ENCODE measurements at regions of chr4 and their contacts with region 1.

Region 1: DNA sequence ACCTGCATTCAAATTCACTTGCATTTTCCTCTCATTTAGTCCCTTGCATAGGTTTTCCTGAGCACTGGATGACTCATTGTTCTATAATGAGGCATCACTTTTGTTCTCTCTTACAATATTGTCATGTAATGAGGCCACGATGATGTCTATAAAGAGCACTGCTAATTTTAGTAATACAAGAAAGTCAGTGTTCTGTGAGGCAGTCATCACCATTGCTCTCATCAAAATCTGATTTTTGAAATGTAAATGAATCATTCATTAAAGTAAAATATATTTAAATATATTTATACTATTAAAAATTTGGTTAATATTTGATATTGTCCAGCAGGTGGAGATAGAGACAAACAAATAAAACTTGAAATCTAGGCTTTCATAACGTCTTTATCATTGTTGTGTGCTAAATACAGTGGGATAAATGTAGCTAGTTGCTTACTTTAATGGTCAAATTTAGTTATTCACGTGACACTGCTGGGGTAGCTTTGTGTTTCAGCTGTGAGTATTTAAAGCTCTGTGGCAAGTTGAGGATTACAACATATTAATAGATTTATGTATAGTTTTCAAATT is 15.4 kb downstream of the HMGB2 start:
- DNase-seq: no peak
- H3K4me3 ChIP-seq: no peak overlapping the region
- H3K27ac ChIP-seq: no peak overlapping the region
- H3K27me3 ChIP-seq: no peaks in the 10 kb centered on the region
- CTCF ChIP-seq: peak; percentile 27; the same call in 1 of the 2 replicates

Region 2: DNA sequence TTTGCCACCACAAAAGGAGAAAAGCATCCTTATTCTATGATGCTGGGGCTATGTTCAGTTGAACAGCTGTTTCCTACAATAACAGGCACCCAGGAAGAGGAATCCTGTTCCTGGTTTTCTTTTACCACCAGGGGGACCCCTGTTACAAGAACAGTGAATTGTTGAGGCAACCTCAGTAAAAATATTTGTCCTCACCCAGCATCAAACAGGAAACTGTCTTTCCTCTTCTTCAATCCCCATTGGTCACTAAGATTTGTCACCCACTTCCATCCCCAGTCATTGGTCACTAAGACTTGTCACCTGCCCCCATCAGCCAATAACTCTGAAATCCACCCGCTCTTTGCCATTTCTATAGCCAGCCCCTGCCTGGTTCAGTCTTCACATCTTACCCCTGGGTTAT is 293.6 kb before region 1 on chr4:
- CTCF ChIA-PET with region 1: interaction called, 4 read pairs
- POLR2A ChIA-PET with region 1: interaction called, 13 read pairs
- DNase-seq: peak; percentile 65
- H3K4me3 ChIP-seq: no peak overlapping the region
- H3K27ac ChIP-seq: no peak overlapping the region
- H3K27me3 ChIP-seq: peaks cover 7% of the 10 kb centered on the region
- CTCF ChIP-seq: peak; percentile 79

Region 3: GRCh38 chr4:173334085-173334772 is 15.5 kb after region 1 on chr4 and contains the start of gene HMGB2:
- CTCF ChIA-PET with region 1: interaction called, 20 read pairs
- POLR2A ChIA-PET with region 1: interaction called, 6 read pairs
- DNase-seq: peak; percentile 100
- H3K4me3 ChIP-seq: peak within 1 kb of the TSS; percentile 90
- H3K27ac ChIP-seq: peak within 1 kb of the TSS; percentile 98
- H3K27me3 ChIP-seq: no peaks in the 10 kb centered on the region
- CTCF ChIP-seq: no peak
- polyA plus RNA-seq, gene HMGB2: 57.7 and 89.8 TPM in 2 replicates

Region 4: GRCh38 chr4:173360587-173361221 is 42.0 kb after region 1 on chr4:
- CTCF ChIA-PET with region 1: interaction called, 18 read pairs
- POLR2A ChIA-PET with region 1: no interaction called
- DNase-seq: no peak
- H3K4me3 ChIP-seq: no peak overlapping the region
- H3K27ac ChIP-seq: no peak overlapping the region
- H3K27me3 ChIP-seq: no peaks in the 10 kb centered on the region
- CTCF ChIP-seq: peak; percentile 55; the same call in 1 of the 2 replicates

Region 5: GRCh38 chr4:173403051-173403450 is 84.3 kb after region 1 on chr4:
- CTCF ChIA-PET with region 1: interaction called, 248 read pairs
- POLR2A ChIA-PET with region 1: no interaction called
- DNase-seq: no peak
- H3K4me3 ChIP-seq: no peak overlapping the region
- H3K27ac ChIP-seq: no peak overlapping the region
- H3K27me3 ChIP-seq: no peaks in the 10 kb centered on the region
- CTCF ChIP-seq: no peak

Region 6: GRCh38 chr4:173466101-173466500 is 147.4 kb after region 1 on chr4:
- CTCF ChIA-PET with region 1: no interaction called
- POLR2A ChIA-PET with region 1: no interaction called
- DNase-seq: no peak
- H3K4me3 ChIP-seq: no peak overlapping the region
- H3K27ac ChIP-seq: no peak overlapping the region
- H3K27me3 ChIP-seq: no peaks in the 10 kb centered on the region
- CTCF ChIP-seq: no peak

Region 7: GRCh38 chr4:173494013-173494970 is 175.6 kb after region 1 on chr4:
- CTCF ChIA-PET with region 1: interaction called, 21 read pairs
- POLR2A ChIA-PET with region 1: no interaction called
- DNase-seq: peak; percentile 41
- H3K4me3 ChIP-seq: peak overlapping the region; percentile 52
- H3K27ac ChIP-seq: no peak overlapping the region
- H3K27me3 ChIP-seq: peaks cover 20% of the 10 kb centered on the region
- CTCF ChIP-seq: peak; percentile 88

Measured in AG04450 (cell line).